Heart right ventricle (tissue), 16 donors: ENCODE measurements at regions of chr19 and their contacts with region 1.

Region 1: DNA sequence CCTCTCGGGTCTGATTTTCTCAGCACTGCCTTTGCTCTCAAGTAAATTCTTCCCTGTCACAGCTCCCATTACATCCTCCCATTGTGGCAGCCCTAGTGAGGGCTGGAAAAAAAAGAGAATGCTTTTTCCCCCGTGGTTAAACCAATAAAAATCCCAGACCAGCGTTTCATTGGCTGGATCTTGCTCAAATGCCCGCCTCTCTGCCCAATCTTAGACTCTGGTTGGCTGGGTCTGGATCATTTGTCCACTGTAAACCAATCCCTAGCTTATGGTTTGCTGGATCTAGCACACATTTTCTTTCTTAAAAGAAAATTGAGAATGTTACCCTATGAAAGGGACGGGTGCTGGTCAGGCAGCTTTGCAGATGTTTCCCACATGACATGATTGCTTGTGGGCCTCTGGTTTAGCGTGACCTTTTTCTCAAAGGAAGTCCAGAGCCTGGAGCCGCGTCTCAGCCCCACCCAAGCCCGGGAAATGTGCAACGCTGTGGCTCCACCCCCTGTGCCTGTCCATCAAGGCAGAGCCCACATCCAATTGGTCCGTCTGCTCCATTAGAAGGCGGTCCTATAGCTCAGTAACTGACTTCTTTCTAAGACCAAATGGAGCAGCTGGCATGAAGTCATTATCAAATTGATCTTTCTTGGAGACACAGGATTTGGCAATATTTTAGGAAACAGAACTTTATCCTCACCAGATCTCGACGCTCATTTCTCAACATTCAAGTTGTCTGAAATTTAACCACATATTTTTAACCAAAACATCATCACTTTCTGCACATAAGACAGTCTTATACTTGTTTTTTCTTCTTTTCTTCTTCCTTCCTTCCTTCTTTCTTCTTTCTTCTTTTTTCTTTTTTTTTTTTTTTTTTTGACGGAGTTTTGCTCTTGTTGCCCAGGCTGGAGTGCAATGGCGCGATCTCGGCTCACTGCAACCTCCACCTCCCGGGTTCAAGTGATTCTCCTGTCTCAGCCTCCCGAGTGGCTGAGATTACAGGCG is 2.6 kb upstream of the MCEMP1 start:
- DNase-seq: peak; percentile 40 to 64
- ATAC-seq: peak in 7 of 8 donors; percentile 62 to 91 (median 76)
- H3K4me3 ChIP-seq: no peak overlapping the region
- H3K27ac ChIP-seq: peak overlapping the region in 1 of 10 donors; percentile 60
- H3K4me1 ChIP-seq: peaks cover 0 to 34% (median 0%) of the 10 kb centered on the region in 9 donors
- H3K27me3 ChIP-seq: peaks cover 0 to 68% (median 31%) of the 10 kb centered on the region in 7 donors
- CTCF ChIP-seq: no peak

Region 2: DNA sequence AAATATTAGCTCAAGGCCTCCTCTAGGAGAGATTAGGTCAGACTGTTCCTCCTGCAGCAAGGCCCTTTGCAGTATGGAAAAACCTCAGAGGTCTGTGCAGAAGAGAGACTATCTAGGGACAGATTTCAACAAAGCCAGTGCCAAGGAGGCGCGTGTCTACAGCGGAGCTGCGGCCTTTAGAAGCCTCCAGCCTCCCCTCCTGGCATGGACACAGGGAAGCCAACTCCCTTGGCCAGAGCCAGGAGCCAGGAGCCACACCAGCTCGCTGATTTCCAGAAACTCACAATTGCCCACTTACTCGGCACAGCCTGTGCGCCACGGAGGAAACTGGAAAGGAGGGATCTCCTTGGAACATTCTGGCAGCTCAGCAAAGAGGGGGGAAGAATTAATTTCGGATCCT is 443.5 kb before region 1 on chr19:
- intact Hi-C with region 1: no loop called
- DNase-seq: peak; percentile 60 to 73
- ATAC-seq: peak; percentile 78 to 95 (median 88)
- H3K4me3 ChIP-seq: no peak overlapping the region
- H3K27ac ChIP-seq: peak overlapping the region in 8 of 10 donors; percentile 15 to 71 (median 38)
- H3K4me1 ChIP-seq: peaks cover 4 to 86% (median 35%) of the 10 kb centered on the region in 9 donors
- H3K27me3 ChIP-seq: no peaks in the 10 kb centered on the region
- CTCF ChIP-seq: no peak

Region 3: DNA sequence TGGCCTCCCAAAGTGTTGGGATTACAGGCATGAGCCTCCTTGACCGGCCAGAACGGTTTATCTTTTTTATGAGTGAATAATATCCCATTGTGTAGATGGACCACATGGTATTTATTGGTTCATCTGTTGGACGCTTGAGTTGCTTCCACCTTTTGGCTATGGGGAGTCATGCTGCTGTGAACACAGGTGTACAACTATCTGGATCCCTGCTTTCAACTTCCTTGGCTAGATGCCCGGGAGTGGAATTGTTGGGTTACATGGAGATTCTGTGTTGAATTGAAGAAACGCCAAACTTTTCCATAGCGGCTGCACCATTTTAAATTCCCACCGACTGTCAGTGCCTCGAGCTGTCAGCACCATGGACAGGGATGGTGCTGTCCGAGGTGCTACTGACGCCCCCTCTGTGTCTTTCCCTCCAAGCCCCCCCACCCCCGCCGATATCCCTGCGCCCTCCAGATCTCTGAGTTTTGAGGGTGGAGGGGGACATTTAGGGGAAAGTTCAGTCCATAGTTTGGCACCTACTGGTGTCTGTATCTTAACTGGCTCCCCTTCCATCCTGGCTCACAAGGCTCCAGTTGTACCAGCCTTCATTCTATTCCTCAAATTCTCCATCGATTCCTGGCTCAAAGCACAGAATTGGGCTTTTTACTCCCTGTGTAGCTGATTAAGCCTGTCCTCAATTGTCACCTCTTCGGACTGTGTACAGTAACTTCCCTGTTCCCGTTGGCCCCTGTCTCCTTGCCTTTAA is 111.5 kb before region 1 on chr19:
- intact Hi-C with region 1: loop called in 3 of 10 experiments (anchors 5 to 10 kb)
- DNase-seq: no peak
- ATAC-seq: no peak
- H3K4me3 ChIP-seq: no peak overlapping the region
- H3K27ac ChIP-seq: no peak overlapping the region
- H3K4me1 ChIP-seq: no peaks in the 10 kb centered on the region
- H3K27me3 ChIP-seq: no peaks in the 10 kb centered on the region
- CTCF ChIP-seq: no peak

Region 4: GRCh38 chr19:7629347-7630054 is 44.8 kb before region 1 on chr19 and contains the starts of genes PET100 and XAB2:
- intact Hi-C with region 1: no loop called
- DNase-seq: peak; percentile 91 to 98
- ATAC-seq: peak; percentile 96 to 99 (median 98)
- H3K4me3 ChIP-seq: peak within 1 kb of the TSS; percentile 71 to 95 (median 88)
- H3K27ac ChIP-seq: peak within 1 kb of the TSS in 9 of 10 donors; percentile 54 to 89 (median 76)
- H3K4me1 ChIP-seq: peaks cover 11 to 39% (median 30%) of the 10 kb centered on the region in 9 donors
- H3K27me3 ChIP-seq: no peaks in the 10 kb centered on the region
- CTCF ChIP-seq: no peak
- total RNA-seq, gene PET100: 119 to 230 (median 150) TPM
- total RNA-seq, gene XAB2: 18.6 to 25.1 (median 22.4) TPM